CD8-positive, alpha-beta T cell (primary cell): ENCODE measurements at regions of chr6 and their contacts with region 1.

Region 1: DNA sequence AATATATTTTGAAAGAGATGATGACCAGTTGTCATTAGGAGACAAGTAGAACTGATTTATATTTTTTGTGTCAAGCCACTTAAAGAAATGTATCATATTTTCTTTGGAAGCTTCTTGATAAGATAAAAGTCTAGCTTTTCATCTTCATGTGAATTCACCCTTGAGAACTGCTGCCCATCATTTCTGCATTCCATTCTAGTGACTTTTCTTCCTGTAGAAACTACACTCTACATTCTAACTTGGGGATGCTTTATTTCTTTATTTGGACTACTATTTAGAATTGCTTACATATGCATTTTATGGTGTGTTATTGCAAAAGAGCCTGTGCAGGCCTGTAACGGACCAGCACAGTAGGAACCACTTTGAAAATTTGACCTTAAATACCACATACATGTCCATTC is 335.0 kb upstream of the KCNQ5 start:
- DNase-seq: no peak
- ATAC-seq: no peak
- H3K4me3 ChIP-seq: no peak overlapping the region
- H3K4me3 Mint-ChIP-seq: no peak overlapping the region
- H3K27ac ChIP-seq: no peak overlapping the region
- H3K27ac Mint-ChIP-seq: no peak overlapping the region
- H3K4me1 ChIP-seq: no peaks in the 10 kb centered on the region
- H3K4me1 Mint-ChIP-seq: no peaks in the 10 kb centered on the region
- H3K27me3 ChIP-seq: no peaks in the 10 kb centered on the region
- H3K27me3 Mint-ChIP-seq: no peaks in the 10 kb centered on the region
- CTCF ChIP-seq: no peak

Region 2: GRCh38 chr6:72238021-72238420 is 48.9 kb before region 1 on chr6:
- CTCF ChIA-PET with region 1: no interaction called
- POLR2A ChIA-PET with region 1: no interaction called
- intact Hi-C with region 1: no loop called
- DNase-seq: no peak
- ATAC-seq: no peak
- H3K4me3 ChIP-seq: no peak overlapping the region
- H3K4me3 Mint-ChIP-seq: no peak overlapping the region
- H3K27ac ChIP-seq: no peak overlapping the region
- H3K27ac Mint-ChIP-seq: no peak overlapping the region
- H3K4me1 ChIP-seq: no peaks in the 10 kb centered on the region
- H3K4me1 Mint-ChIP-seq: no peaks in the 10 kb centered on the region
- H3K27me3 ChIP-seq: no peaks in the 10 kb centered on the region
- H3K27me3 Mint-ChIP-seq: no peaks in the 10 kb centered on the region
- CTCF ChIP-seq: no peak

Region 3: GRCh38 chr6:72305971-72306370 is 19.1 kb after region 1 on chr6:
- CTCF ChIA-PET with region 1: no interaction called
- POLR2A ChIA-PET with region 1: no interaction called
- intact Hi-C with region 1: no loop called
- DNase-seq: no peak
- ATAC-seq: no peak
- H3K4me3 ChIP-seq: no peak overlapping the region
- H3K4me3 Mint-ChIP-seq: no peak overlapping the region
- H3K27ac ChIP-seq: no peak overlapping the region
- H3K27ac Mint-ChIP-seq: no peak overlapping the region
- H3K4me1 ChIP-seq: no peaks in the 10 kb centered on the region
- H3K4me1 Mint-ChIP-seq: no peaks in the 10 kb centered on the region
- H3K27me3 ChIP-seq: no peaks in the 10 kb centered on the region
- H3K27me3 Mint-ChIP-seq: no peaks in the 10 kb centered on the region
- CTCF ChIP-seq: no peak

Region 4: DNA sequence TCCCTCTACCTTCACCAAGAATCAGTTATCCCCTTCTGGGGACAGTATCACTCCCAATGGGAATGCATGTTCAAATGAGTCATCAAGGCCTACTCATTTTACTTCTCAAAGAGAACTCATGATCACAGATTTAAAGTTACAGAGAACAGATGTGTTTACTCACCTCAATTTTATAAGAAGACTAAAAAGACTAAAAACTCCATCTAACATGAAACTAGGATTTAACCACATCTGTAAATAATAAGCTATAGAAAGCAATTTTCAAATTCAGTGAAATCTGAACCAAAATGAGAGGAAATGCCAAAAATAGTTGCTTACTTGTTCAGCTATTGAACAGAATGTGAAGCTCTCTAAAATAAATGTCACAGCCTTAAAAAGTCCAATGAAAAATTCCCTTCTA is 34.9 kb after region 1 on chr6:
- CTCF ChIA-PET with region 1: no interaction called
- POLR2A ChIA-PET with region 1: no interaction called
- intact Hi-C with region 1: loop called in 1 of 2 experiments (anchors 1 kb)
- DNase-seq: no peak
- ATAC-seq: no peak
- H3K4me3 ChIP-seq: no peak overlapping the region
- H3K4me3 Mint-ChIP-seq: no peak overlapping the region
- H3K27ac ChIP-seq: no peak overlapping the region
- H3K27ac Mint-ChIP-seq: no peak overlapping the region
- H3K4me1 ChIP-seq: no peaks in the 10 kb centered on the region
- H3K4me1 Mint-ChIP-seq: no peaks in the 10 kb centered on the region
- H3K27me3 ChIP-seq: no peaks in the 10 kb centered on the region
- H3K27me3 Mint-ChIP-seq: no peaks in the 10 kb centered on the region
- CTCF ChIP-seq: no peak